Gastrocnemius medialis (tissue), 4 donors: ENCODE measurements at regions of chr7 and their contacts with region 1.

Region 1: DNA sequence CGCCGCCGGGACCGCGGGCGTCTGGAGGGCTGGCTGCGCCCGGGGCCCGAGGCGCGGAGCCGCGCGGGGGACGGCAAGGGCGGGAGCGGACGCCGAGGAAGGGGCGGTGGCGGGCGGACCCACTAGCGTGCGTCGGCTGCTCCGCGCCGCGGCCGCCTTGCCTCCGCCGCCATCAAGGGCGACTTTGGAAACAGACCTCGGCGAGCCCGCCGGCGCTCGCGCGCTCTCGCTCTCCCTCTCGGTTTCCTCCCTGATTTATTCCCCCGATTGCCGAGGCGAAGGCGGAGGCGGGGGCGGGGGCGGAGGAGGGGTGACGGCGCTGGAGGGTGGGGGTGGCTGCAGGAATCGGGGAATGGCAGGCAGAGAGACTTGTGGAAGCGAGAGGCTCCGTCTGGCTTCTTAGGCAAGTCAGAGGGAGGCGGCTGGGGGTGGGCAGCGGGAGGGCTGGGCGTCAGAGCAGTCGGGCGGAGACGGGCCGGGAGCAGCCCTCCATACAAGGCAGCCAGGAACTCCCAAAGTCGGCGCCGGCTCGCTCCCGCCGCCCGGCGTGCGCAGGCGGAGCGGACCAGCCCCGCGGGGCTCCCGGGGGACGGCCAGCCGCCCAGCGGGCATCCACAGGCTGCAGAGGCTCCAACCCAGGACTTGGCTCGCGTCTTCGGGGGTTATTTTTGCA is at the start of gene CACNA2D1:
- DNase-seq: peak; percentile 84 to 89
- ATAC-seq: peak; percentile 79 to 81
- H3K4me3 ChIP-seq: peak within 1 kb of the TSS; percentile 79 to 93 (median 84)
- H3K27ac ChIP-seq: peak within 1 kb of the TSS; percentile 96 to 97 (median 97)
- H3K4me1 ChIP-seq: peaks cover 34 to 35% of the 10 kb centered on the region in 2 donors
- H3K27me3 ChIP-seq: no peaks in the 10 kb centered on the region
- CTCF ChIP-seq: peak in 4 of 5 experiments; percentile 28 to 62 (median 52)
- POLR2A ChIP-seq: peak; percentile 32 to 62
- total RNA-seq, gene CACNA2D1: 83.9 to 157 (median 120) TPM

Region 2: DNA sequence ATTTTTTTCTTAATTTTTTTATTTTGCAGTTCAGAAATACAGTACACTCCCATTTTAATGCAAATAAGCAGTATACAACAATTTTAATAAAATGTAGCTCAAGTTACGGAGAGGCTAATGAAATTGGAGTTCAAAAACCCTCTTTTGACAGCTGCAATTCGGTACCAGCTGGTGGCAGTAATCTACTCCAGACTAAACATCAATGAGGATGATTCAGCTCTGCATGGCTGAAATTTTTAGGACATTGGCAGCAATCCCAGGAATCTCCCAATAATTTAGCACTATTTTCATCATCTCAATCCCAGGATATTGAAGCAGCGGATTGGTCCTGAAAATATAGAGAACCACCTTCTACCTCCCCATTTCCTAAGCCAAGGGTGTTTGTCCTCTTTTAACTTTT is 278.9 kb before region 1 on chr7:
- in situ Hi-C with region 1: no loop called
- intact Hi-C with region 1: loop called (anchors 10 kb)
- DNase-seq: peak; percentile 8 to 35
- ATAC-seq: peak in 1 of 2 donors; percentile 63
- H3K4me3 ChIP-seq: no peak overlapping the region
- H3K27ac ChIP-seq: peak overlapping the region in 2 of 4 donors; percentile 35 to 51
- H3K4me1 ChIP-seq: peaks cover 19 to 32% of the 10 kb centered on the region in 2 donors
- H3K27me3 ChIP-seq: no peaks in the 10 kb centered on the region
- CTCF ChIP-seq: peak in 2 of 5 experiments; percentile 20 to 42
- POLR2A ChIP-seq: no peak

Region 3: DNA sequence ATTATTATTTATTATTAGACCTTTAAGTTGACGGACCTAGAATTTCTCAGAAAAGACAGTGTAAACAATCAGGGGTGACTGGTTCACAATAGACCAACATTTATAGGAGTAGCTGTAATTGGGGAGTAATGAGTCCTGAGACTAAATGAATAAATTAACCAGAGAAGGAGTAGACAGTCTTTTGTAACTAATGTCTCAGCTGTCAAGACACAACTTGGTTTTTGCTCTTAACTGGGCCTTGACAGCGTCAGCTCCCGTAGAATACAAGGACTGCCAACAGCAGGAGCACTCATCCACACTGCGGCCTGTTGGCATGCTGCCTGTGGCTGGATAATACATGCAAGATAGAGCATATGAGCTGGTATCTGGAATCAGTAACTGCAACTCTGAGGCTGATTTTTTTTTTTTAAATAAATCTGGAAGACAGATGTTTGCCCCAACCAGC is 124.0 kb before region 1 on chr7:
- in situ Hi-C with region 1: no loop called
- intact Hi-C with region 1: loop called (anchors 5 kb)
- DNase-seq: peak; percentile 87 to 95
- ATAC-seq: peak; percentile 67 to 84
- H3K4me3 ChIP-seq: peak overlapping the region in 1 of 4 donors; percentile 14
- H3K27ac ChIP-seq: peak overlapping the region; percentile 79 to 88 (median 84)
- H3K4me1 ChIP-seq: peaks cover 56 to 61% of the 10 kb centered on the region in 2 donors
- H3K27me3 ChIP-seq: no peaks in the 10 kb centered on the region
- CTCF ChIP-seq: no peak
- POLR2A ChIP-seq: no peak

Region 4: GRCh38 chr7:82481499-82482097 is 37.9 kb after region 1 on chr7:
- in situ Hi-C with region 1: no loop called
- intact Hi-C with region 1: loop called (anchors 5 kb)
- DNase-seq: no peak
- ATAC-seq: no peak
- H3K4me3 ChIP-seq: no peak overlapping the region
- H3K27ac ChIP-seq: no peak overlapping the region
- H3K4me1 ChIP-seq: peaks cover 22 to 24% of the 10 kb centered on the region in 2 donors
- H3K27me3 ChIP-seq: no peaks in the 10 kb centered on the region
- CTCF ChIP-seq: peak; percentile 48 to 87 (median 77)
- POLR2A ChIP-seq: no peak

Region 5: GRCh38 chr7:82566752-82567151 is 123.1 kb after region 1 on chr7:
- in situ Hi-C with region 1: no loop called
- intact Hi-C with region 1: loop called (anchors 2 kb)
- DNase-seq: no peak
- ATAC-seq: no peak
- H3K4me3 ChIP-seq: no peak overlapping the region
- H3K27ac ChIP-seq: no peak overlapping the region
- H3K4me1 ChIP-seq: peaks cover 5 to 14% of the 10 kb centered on the region in 2 donors
- H3K27me3 ChIP-seq: no peaks in the 10 kb centered on the region
- CTCF ChIP-seq: no peak
- POLR2A ChIP-seq: no peak

Region 6: DNA sequence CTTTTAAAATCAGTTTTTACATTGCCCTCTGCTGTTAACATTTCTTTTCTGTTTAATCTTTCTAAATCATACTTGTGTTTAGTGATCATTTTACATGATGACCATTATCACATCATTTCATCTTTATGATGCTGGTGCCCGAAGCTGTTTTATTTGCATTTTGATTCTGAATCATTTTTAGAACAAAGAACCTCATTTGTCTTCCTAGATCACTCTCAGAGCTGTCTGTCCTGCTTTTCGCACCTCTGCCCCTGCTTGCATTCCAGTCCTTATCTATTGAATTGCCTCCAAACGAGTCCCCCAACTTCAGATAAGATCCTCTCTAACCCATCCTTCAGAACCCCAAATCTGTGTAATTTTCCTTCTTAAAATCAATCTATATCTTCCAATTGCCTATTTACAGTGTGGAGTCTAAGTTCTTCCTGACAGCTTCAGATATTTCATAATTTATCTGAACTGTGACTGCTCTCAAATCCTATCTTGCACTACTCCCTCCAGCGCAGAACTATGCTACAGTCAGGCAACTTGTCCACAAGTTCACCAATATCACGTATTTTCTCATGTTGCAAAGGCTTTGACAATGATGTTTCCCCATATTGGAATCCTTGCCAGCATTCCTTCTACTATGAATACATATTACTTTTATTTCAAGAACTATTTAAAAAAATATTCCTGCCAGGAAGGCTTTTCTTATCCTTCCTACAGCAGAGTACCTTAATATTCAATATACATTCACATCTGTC is 346.4 kb after region 1 on chr7:
- in situ Hi-C with region 1: no loop called
- intact Hi-C with region 1: no loop called
- DNase-seq: no peak
- ATAC-seq: no peak
- H3K4me3 ChIP-seq: no peak overlapping the region
- H3K27ac ChIP-seq: no peak overlapping the region
- H3K4me1 ChIP-seq: no peaks in the 10 kb centered on the region
- H3K27me3 ChIP-seq: no peaks in the 10 kb centered on the region
- CTCF ChIP-seq: no peak
- POLR2A ChIP-seq: no peak